Heart left ventricle (tissue), 16 donors: ENCODE measurements at regions of chr11 and their contacts with region 1.

Region 1: DNA sequence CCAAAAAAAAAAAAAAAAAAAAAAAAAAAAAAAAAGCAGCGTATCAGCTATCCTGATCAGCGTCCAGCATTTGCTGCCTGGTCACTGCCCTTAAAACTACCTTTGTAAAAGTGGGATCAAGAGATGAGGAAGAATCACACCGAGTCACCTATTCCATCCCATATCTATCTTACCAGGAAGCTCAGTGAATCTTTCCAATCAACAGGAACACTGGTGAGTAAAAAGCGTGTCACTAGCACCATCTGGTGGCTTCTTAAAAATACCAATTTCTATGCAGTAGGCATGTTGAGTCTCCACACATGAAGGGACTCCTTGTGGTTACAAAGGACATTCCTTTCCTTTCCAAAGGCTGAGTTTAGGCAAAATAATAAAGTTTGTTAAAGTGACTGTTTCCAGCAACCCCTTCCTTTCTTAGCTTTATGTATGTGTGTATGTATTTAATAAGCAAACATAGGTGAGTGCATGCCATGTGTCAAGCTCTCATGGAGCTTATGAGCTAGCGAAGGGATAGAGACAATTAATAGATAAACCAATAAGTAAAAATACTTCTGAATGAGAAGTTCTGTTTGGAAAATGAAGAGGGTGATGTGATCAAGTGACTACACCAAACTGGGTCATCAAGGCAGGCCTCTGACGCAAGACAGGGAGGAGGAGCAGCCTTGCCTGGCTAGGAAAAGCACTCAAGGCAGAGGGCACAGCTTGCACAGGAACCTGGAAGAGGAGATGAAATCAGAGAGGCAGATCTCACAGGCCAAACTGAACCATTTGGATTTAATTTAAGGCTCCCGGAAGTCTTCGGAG is 13.9 kb upstream of the TP53AIP1 start:
- DNase-seq: peak in 1 of 5 donors; percentile 38
- ATAC-seq: peak; percentile 81 to 88 (median 82)
- H3K4me3 ChIP-seq: no peak overlapping the region
- H3K27ac ChIP-seq: no peak overlapping the region
- H3K4me1 ChIP-seq: no peaks in the 10 kb centered on the region
- H3K27me3 ChIP-seq: peaks cover 0 to 9% (median 0%) of the 10 kb centered on the region in 9 donors
- CTCF ChIP-seq: peak; percentile 53 to 81 (median 68)
- POLR2A ChIP-seq: no peak

Region 2: GRCh38 chr11:128039140-128040021 is 917.2 kb before region 1 on chr11:
- intact Hi-C with region 1: loop called in 7 of 10 experiments (anchors 5 to 10 kb)
- DNase-seq: peak in 4 of 5 donors; percentile 23 to 74 (median 32)
- ATAC-seq: peak in 3 of 4 donors; percentile 66 to 92 (median 78)
- H3K4me3 ChIP-seq: peak overlapping the region in 1 of 12 donors; percentile 19
- H3K27ac ChIP-seq: peak overlapping the region in 1 of 12 donors; percentile 72
- H3K4me1 ChIP-seq: peaks cover 0 to 39% (median 0%) of the 10 kb centered on the region in 12 donors
- H3K27me3 ChIP-seq: peaks cover 0 to 15% (median 0%) of the 10 kb centered on the region in 9 donors
- CTCF ChIP-seq: peak in 2 of 12 donors; percentile 7 to 16
- POLR2A ChIP-seq: no peak

Region 3: GRCh38 chr11:128164080-128164741 is 792.4 kb before region 1 on chr11:
- intact Hi-C with region 1: loop called in 7 of 10 experiments (anchors 5 to 10 kb)
- DNase-seq: no peak
- ATAC-seq: no peak
- H3K4me3 ChIP-seq: no peak overlapping the region
- H3K27ac ChIP-seq: no peak overlapping the region
- H3K4me1 ChIP-seq: peaks cover 0 to 6% (median 0%) of the 10 kb centered on the region in 12 donors
- H3K27me3 ChIP-seq: peaks cover 0 to 6% (median 0%) of the 10 kb centered on the region in 9 donors
- CTCF ChIP-seq: no peak
- POLR2A ChIP-seq: no peak

Region 4: DNA sequence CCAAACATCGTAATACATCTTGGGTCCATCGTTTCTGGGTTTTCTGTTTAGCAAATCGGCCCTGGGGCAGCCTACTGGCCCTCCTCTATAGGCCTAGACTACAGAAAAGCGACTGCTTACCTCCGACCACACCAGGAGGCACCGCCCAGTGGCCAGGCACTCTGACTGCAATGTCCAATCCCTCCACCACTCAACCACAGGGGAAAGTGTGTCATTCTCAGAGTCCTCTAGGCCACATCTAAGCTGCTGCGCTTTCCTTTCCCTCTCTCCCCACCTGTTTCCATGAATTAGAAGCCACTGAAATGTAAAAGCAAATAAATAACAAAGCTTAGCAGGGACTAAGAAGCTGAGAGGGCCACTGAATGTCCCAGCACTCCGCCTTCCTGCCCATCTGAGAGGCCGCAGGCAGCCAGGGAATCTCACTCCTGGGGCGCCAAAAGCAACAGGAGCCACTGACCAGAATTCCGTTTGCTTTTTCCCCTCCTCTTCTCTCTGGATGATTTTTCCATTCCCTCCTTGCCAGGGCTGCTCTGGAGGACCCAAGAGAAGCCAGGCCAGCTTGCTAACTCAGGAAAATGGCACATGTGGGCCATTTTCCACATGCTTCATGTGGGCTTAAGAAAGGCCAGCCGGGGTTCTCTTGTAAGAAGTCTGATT is 312.8 kb before region 1 on chr11:
- intact Hi-C with region 1: loop called in 1 of 10 experiments (anchors 10 kb)
- DNase-seq: no peak
- ATAC-seq: no peak
- H3K4me3 ChIP-seq: no peak overlapping the region
- H3K27ac ChIP-seq: no peak overlapping the region
- H3K4me1 ChIP-seq: peaks cover 0 to 12% (median 0%) of the 10 kb centered on the region in 12 donors
- H3K27me3 ChIP-seq: peaks cover 0 to 4% (median 0%) of the 10 kb centered on the region in 9 donors
- CTCF ChIP-seq: no peak
- POLR2A ChIP-seq: no peak

Region 5: DNA sequence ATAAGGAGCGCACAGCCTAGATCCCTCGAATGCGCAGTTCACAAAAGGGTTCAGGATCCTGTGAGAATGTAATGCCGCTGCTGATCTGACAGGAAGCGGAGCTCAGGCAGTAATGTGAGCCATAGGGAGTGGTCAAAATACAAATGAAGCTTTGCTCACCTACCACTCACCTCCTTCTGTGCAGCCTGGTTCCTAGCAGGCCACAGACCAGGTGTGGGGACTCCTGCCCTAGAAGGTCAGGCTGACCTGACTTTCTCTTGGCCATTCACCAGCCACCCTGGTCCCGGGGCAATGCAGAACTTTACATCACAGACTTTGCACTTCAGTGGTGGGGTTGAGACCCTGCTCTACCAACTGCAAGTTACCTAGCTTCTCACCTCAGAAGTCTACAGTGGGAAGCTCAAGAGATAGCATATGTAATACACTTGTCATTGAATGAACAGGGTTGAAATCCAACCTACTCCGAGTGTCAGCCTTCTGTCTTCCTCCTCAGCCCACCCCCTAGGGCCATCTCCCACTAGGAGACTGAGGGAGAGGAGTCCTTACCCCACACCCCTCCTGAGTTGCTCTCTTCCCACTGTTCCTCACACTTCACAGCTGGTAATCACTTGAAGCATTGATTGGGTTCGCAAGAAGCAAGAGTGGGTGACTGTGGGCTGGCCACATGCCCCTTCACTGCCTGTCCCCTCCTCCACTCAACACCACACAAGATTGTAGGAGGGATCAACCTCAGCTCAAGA is 87.6 kb before region 1 on chr11:
- intact Hi-C with region 1: no loop called
- DNase-seq: no peak
- ATAC-seq: peak in 1 of 4 donors; percentile 9
- H3K4me3 ChIP-seq: no peak overlapping the region
- H3K27ac ChIP-seq: no peak overlapping the region
- H3K4me1 ChIP-seq: no peaks in the 10 kb centered on the region
- H3K27me3 ChIP-seq: no peaks in the 10 kb centered on the region
- CTCF ChIP-seq: no peak
- POLR2A ChIP-seq: no peak

Region 6: GRCh38 chr11:128917144-128917724 is 39.4 kb before region 1 on chr11:
- intact Hi-C with region 1: loop called in 2 of 10 experiments (anchors 2 to 5 kb)
- DNase-seq: no peak
- ATAC-seq: peak in 1 of 4 donors; percentile 65
- H3K4me3 ChIP-seq: no peak overlapping the region
- H3K27ac ChIP-seq: no peak overlapping the region
- H3K4me1 ChIP-seq: peaks cover 0 to 11% (median 0%) of the 10 kb centered on the region in 12 donors
- H3K27me3 ChIP-seq: no peaks in the 10 kb centered on the region
- CTCF ChIP-seq: no peak
- POLR2A ChIP-seq: no peak

Region 7: GRCh38 chr11:129259931-129260348 is 303.3 kb after region 1 on chr11:
- intact Hi-C with region 1: no loop called
- DNase-seq: no peak
- ATAC-seq: no peak
- H3K4me3 ChIP-seq: no peak overlapping the region
- H3K27ac ChIP-seq: no peak overlapping the region
- H3K4me1 ChIP-seq: peaks cover 0 to 8% (median 0%) of the 10 kb centered on the region in 12 donors
- H3K27me3 ChIP-seq: no peaks in the 10 kb centered on the region
- CTCF ChIP-seq: no peak
- POLR2A ChIP-seq: no peak